ENCODE measurements at regions of chr19 and their contacts with region 1.

Region 1: GRCh38 chr19:13986348-13986904 is 19.7 kb downstream of the RFX1 start:
- DNase-seq: peak; percentile 96
- H3K4me3 Mint-ChIP-seq: peak overlapping the region; percentile 56
- H3K27ac Mint-ChIP-seq: peak overlapping the region; percentile 88
- H3K4me1 Mint-ChIP-seq: peaks cover 48% of the 10 kb centered on the region
- H3K27me3 Mint-ChIP-seq: no peaks in the 10 kb centered on the region

Region 2: GRCh38 chr19:13952154-13953035 is 34.0 kb before region 1 on chr19 and contains the start of gene DCAF15:
- intact Hi-C with region 1: loop called (anchors 1 kb)
- DNase-seq: peak; percentile 99
- H3K4me3 Mint-ChIP-seq: peak within 1 kb of the TSS; percentile 96
- H3K27ac Mint-ChIP-seq: peak within 1 kb of the TSS; percentile 86
- H3K4me1 Mint-ChIP-seq: peaks cover 17% of the 10 kb centered on the region
- H3K27me3 Mint-ChIP-seq: no peaks in the 10 kb centered on the region
- total RNA-seq, gene DCAF15: 57.8 and 61.5 TPM in 2 replicates

Region 3: DNA sequence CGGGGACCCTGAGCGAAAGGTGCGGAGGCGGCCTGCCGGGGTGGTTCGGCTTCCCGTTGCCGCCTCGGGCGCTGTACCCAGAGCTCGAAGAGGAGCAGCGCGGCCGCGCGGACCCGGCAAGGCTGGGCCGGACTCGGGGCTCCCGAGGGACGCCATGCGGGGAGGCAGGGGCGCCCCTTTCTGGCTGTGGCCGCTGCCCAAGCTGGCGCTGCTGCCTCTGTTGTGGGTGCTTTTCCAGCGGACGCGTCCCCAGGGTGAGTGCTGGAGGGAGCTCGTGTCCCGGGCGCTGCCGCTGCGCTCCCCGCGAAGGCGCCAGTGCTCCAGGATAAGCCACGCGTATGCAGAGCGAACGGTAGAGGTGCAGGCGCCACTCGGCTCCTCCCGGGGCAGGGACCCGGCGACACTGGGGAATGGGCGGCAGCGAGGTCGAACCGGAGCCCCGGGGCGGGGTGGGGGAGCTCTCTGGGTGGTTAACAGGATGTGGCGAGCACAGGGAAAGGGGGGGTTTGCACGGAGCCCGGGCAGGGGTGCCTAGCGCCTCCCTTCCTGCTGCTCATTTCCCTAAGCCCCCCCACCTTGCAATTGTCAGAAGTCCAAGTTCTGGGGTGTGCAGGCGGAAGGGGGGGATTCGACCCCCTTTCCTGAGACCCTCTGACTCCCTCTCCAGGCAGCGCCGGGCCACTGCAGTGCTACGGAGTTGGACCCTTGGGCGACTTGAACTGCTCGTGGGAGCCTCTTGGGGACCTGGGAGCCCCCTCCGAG is 45.5 kb after region 1 on chr19 and contains the start of gene IL27RA:
- intact Hi-C with region 1: loop called (anchors 1 kb)
- DNase-seq: peak; percentile 78
- H3K4me3 Mint-ChIP-seq: peak within 1 kb of the TSS; percentile 95
- H3K27ac Mint-ChIP-seq: peak within 1 kb of the TSS; percentile 96
- H3K4me1 Mint-ChIP-seq: peaks cover 13% of the 10 kb centered on the region
- H3K27me3 Mint-ChIP-seq: peaks cover 3% of the 10 kb centered on the region
- total RNA-seq, gene IL27RA: 82.5 and 84.9 TPM in 2 replicates

Region 4: GRCh38 chr19:14081325-14082093 is 95.1 kb after region 1 on chr19:
- intact Hi-C with region 1: loop called (anchors 2 kb)
- DNase-seq: peak; percentile 99
- H3K4me3 Mint-ChIP-seq: peak overlapping the region; percentile 96
- H3K27ac Mint-ChIP-seq: peak overlapping the region; percentile 97
- H3K4me1 Mint-ChIP-seq: peaks cover 8% of the 10 kb centered on the region
- H3K27me3 Mint-ChIP-seq: no peaks in the 10 kb centered on the region

Measured in activated T-helper 1 cell treated with anti-CD3 and anti-CD28 coated beads, Interleukin-12 subunit alpha, Interleukin-12 subunit beta, Interleukin-2, Interleukin-4 antibody, amounts not matched to agents 30 ng/mL and 10 ng/mL and 1 ng/mL, durations not matched to agents 14 hours and 24 hours and 36 hours (primary cell).